MCF 10A (cell line): ENCODE measurements at regions of chr1 and their contacts with region 1.

Region 1: DNA sequence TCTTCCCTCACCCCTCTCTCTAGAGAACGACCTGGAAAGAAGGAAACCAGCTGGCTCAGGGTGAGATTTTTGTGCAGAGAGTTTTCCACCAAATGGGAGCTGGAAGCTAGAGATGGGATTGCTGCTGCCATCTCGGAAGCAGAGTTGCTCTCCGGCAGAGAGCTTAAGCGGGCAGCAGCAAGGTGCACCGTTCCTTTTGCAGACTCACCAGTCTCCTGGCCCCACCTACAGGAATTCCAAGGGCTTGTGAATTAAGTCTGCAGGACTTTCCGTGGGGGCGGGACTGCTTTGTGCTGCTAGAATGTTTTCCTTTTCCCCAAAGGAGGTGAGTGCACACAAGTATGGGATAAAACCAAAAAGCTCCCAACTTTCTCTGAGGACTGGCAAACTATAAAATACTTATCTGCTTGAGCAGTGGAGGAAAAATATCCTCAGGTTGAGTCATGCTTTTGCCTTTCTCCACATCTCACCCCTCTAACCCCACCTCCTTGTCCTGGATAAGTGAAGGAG is 29.1 kb upstream of the KIAA0040 start:
- DNase-seq: peak; percentile 91
- H3K4me3 Mint-ChIP-seq: no peak overlapping the region
- H3K27ac Mint-ChIP-seq: no peak overlapping the region
- H3K4me1 Mint-ChIP-seq: peaks cover 27% of the 10 kb centered on the region
- H3K27me3 Mint-ChIP-seq: no peaks in the 10 kb centered on the region
- CTCF ChIP-seq: peak; percentile 45

Region 2: DNA sequence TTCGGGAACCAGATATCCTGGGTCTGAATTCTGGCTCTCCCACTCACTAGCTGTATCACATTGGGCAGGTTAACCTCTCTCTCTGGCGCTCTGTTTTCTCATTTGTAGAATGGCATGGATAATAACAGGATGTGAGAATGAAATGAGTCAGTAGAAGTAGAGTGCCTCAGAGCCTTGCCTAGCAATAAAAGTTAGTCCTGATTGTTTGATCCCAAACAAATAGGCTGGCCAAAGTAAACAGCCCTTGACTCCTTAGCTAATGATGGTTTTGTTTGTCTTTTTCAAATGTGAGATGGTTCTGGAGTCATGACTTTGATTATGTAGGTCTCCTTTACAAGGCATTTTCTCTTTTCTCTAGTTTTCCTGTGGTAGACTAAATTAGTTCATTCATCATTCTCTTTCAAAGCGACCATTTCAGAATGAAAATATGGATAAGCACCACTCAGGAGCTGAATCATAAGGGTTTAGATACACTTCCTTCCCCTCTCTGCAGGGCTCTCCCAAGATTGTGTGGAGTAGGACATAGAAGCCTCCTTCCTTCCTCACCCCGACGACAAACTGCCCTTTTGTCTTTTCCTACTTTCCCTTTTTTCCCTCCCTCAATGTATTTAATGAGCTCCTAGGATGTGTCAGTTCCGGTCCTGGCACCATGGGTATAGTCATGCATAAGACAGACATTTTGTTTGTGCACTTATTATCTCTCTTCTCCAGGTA is 52.3 kb before region 1 on chr1:
- CTCF ChIA-PET with region 1: interaction called, 23 read pairs
- POLR2A ChIA-PET with region 1: interaction called, 3 read pairs
- intact Hi-C with region 1: no loop called
- DNase-seq: peak; percentile 68
- H3K4me3 Mint-ChIP-seq: no peak overlapping the region
- H3K27ac Mint-ChIP-seq: peak overlapping the region; percentile 21
- H3K4me1 Mint-ChIP-seq: peaks cover 24% of the 10 kb centered on the region
- H3K27me3 Mint-ChIP-seq: no peaks in the 10 kb centered on the region
- CTCF ChIP-seq: no peak

Region 3: DNA sequence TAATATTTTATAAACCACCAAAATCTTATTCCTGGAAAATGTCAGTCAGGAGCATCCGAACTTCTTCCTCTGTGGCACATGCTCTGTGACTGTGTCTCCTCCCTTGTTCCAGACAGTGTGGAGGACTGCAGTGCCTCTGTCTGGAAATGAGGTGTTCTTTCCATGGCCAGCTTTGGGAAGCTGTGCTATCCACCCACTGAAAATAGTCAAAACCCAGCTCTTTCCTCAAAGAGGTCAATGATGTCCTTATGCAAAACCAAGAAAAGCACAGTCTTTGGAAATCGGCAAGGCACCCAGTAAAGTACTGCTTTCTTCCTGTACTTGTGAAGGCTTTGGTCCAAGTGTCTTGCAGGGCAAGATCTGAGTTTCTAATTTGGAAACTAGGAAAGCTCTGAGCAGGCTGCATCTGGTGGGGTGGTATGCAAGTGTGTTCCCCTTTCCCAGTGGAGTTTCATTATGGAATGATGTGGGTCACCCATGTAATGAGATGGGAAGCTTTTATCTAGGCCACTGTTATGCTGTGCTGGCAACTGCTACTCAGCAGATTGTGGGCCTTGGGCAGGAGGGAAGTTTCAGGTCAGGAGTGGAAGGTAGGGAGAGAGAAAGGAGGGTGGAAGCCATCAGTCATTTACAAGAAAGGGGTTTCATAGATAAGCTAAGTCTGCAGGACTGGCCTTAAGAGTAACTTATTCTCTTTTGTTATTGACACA is 35.1 kb before region 1 on chr1:
- CTCF ChIA-PET with region 1: interaction called, 31 read pairs
- POLR2A ChIA-PET with region 1: interaction called, 22 read pairs
- intact Hi-C with region 1: no loop called
- DNase-seq: no peak
- H3K4me3 Mint-ChIP-seq: no peak overlapping the region
- H3K27ac Mint-ChIP-seq: no peak overlapping the region
- H3K4me1 Mint-ChIP-seq: peaks cover 26% of the 10 kb centered on the region
- H3K27me3 Mint-ChIP-seq: no peaks in the 10 kb centered on the region
- CTCF ChIP-seq: no peak

Region 4: DNA sequence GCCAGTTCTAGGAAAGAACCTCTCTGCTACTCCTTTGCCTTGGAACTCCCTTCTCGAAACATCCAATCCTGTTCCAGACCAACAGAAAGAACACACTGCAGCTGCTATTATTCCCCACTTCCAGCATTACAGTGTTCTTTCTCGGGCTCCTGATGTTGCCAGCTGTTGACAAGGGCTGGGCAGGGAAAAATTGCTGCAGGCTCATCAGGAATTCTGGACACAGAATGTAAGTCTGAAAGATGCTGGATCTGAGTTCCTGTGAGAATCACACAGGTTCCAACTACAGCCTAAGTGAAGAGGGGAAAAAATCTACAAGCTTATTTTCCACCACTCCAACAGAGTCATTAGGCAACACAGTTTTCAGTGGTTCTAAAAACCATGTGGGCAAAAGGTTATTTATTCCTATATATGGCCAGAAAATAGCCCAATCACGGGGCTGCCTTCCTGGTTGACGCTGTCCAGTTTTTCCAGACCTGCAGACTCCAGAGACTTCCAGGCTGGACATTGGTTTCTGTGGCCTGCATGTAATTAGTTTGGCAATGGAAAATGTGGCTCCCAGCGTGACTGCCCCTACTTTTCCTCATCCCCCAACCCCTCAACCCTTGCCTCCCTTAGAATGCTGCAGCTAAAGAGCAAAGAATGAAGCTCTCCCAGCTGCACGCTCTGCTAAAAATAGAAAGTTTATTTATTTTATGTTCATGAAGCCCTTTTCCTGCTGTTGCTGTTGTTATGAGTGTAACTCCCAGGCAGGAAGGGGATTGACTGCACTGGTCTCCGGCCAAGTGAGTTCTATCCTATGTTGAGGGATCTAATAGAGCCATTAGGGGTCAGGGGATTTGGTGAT is 20.8 kb before region 1 on chr1:
- CTCF ChIA-PET with region 1: interaction called, 18 read pairs
- POLR2A ChIA-PET with region 1: interaction called, 8 read pairs
- intact Hi-C with region 1: no loop called
- DNase-seq: no peak
- H3K4me3 Mint-ChIP-seq: no peak overlapping the region
- H3K27ac Mint-ChIP-seq: no peak overlapping the region
- H3K4me1 Mint-ChIP-seq: peaks cover 22% of the 10 kb centered on the region
- H3K27me3 Mint-ChIP-seq: no peaks in the 10 kb centered on the region
- CTCF ChIP-seq: no peak

Region 5: GRCh38 chr1:175237389-175237788 is 15.7 kb after region 1 on chr1:
- CTCF ChIA-PET with region 1: interaction called, 17 read pairs
- POLR2A ChIA-PET with region 1: interaction called, 3 read pairs
- intact Hi-C with region 1: no loop called
- DNase-seq: no peak
- H3K4me3 Mint-ChIP-seq: no peak overlapping the region
- H3K27ac Mint-ChIP-seq: no peak overlapping the region
- H3K4me1 Mint-ChIP-seq: no peaks in the 10 kb centered on the region
- H3K27me3 Mint-ChIP-seq: no peaks in the 10 kb centered on the region
- CTCF ChIP-seq: no peak